ENCODE measurements at regions of chr13 and their contacts with region 1.

Region 1: DNA sequence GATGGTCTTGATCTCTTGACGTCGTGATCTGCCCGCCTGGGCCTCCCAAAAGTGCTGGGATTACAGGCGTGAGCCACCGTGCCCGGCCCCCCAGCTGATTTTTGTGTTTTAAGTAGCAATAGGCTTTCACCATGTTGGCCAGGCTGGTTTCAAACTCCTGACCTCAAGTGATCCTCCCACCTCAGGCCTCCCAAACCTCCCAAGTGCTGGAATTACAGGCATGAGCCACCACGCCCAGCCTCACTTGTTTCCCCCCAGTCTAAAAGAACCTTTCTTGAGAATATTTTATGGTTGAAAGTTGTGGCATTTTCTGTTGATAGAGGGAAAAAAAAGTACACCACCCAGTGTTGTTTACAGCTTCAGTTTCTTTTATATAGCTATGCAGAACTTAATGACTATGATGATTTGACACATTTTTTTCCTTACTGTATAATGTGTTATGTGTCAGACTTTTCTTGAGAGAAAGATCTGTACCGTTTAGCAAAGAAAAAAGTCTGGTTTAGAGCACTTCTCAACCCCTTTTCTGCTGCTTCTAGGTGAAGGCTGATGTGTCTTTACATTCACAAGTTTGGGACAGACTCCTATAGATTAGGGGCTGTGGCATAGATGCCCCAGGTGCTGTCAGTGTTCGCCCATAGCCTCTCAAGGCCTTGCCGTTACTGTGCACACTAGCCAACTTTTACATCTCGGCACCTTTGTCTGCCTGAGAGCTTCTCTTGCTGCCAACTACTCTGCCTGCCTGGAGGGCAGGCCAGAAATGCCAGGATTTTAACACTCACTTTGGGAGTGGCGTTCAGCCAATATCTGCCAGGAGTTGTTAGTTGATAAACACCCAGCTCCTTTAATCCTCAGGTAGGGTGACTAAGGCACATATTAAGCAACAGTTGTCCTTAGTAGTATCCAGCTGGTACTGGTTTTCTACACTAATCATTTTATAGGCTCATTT is 33.0 kb downstream of the KCTD4 start:
- DNase-seq: peak; percentile 99
- H3K4me3 Mint-ChIP-seq: peak overlapping the region; percentile 46
- H3K27ac Mint-ChIP-seq: peak overlapping the region; percentile 90
- H3K4me1 Mint-ChIP-seq: peaks cover 16% of the 10 kb centered on the region
- H3K27me3 Mint-ChIP-seq: no peaks in the 10 kb centered on the region
- CTCF ChIP-seq: no peak

Region 2: DNA sequence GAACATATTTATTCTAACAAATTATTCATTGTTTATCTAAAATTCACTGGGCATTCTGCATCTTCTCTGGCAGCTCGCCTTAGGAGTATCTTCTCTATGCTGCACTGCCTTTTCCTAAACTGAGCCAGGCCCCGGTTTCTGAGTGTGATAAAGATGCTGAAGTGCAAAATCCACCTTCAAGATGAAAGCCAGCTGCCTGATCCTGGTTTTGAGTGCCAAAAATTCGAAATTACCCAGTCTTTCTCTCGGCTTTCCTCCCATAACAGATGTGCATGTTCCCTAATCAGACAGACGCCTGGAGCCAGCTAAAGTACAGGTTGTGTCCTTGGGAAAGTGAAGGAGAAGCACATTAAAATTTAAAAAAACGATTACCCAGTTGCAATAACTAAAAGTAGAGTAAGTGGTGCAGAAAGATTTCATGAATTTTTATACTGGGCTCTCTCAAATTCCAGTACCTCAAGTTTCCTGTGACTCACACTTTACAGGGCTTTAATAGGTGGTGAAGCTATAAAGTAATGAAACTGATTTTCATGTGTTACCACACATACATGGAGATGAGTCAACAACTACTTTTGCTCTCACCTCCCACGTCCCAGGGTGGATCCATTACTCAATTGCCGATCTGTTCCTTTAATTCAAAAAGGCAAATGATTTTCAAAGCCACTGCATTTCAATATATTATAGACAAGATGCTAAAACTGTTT is 112.5 kb before region 1 on chr13:
- CTCF ChIA-PET with region 1: interaction called, 4 read pairs
- POLR2A ChIA-PET with region 1: interaction called, 30 read pairs
- intact Hi-C with region 1: no loop called
- DNase-seq: peak; percentile 93
- H3K4me3 Mint-ChIP-seq: peak overlapping the region; percentile 66
- H3K27ac Mint-ChIP-seq: peak overlapping the region; percentile 88
- H3K4me1 Mint-ChIP-seq: peaks cover 14% of the 10 kb centered on the region
- H3K27me3 Mint-ChIP-seq: no peaks in the 10 kb centered on the region
- CTCF ChIP-seq: no peak

Region 3: DNA sequence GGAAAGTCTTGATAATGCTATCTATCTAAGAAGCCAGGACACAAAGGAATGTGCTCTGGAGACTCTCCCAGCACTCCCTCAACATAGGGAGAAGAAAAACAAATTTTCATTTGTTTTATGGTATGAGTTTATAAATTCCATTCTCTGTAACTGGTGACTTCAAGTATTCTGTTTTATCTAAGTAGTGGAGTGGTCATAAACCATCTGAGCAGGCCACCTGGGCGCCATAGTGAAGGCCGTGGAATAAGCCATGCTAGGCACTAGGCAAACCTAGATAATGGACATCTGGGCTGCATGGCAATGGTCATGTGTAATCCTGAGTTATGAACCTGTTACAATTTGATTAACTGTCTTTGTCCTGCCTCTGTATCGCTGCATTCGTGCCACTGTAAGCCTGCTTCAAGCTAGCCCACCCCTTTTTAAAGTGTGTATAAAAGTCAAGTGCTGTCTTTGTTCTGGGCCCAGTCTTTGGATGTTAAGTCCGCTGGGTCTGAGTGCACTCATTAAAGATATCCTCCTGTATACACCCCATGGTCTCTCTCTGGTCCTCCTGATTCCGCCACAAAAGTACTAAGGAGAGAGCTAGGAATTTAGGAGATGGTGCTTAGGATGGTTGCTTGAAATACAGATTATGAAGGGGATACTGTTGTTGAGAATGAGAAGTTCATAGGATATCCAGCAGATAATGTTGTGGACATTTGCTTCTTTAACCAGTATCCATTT is 34.3 kb before region 1 on chr13:
- CTCF ChIA-PET with region 1: no interaction called
- POLR2A ChIA-PET with region 1: interaction called, 19 read pairs
- intact Hi-C with region 1: no loop called
- DNase-seq: no peak
- H3K4me3 Mint-ChIP-seq: no peak overlapping the region
- H3K27ac Mint-ChIP-seq: no peak overlapping the region
- H3K4me1 Mint-ChIP-seq: peaks cover 30% of the 10 kb centered on the region
- H3K27me3 Mint-ChIP-seq: no peaks in the 10 kb centered on the region
- CTCF ChIP-seq: no peak

Region 4: GRCh38 chr13:45178349-45179162 is 10.7 kb after region 1 on chr13:
- CTCF ChIA-PET with region 1: interaction called, 10 read pairs
- POLR2A ChIA-PET with region 1: interaction called, 48 read pairs
- intact Hi-C with region 1: no loop called
- DNase-seq: peak; percentile 14
- H3K4me3 Mint-ChIP-seq: no peak overlapping the region
- H3K27ac Mint-ChIP-seq: peak overlapping the region; percentile 11
- H3K4me1 Mint-ChIP-seq: peaks cover 15% of the 10 kb centered on the region
- H3K27me3 Mint-ChIP-seq: no peaks in the 10 kb centered on the region
- CTCF ChIP-seq: no peak

Region 5: GRCh38 chr13:45184693-45185092 is 16.8 kb after region 1 on chr13:
- CTCF ChIA-PET with region 1: interaction called, 10 read pairs
- POLR2A ChIA-PET with region 1: interaction called, 48 read pairs
- intact Hi-C with region 1: no loop called
- DNase-seq: no peak
- H3K4me3 Mint-ChIP-seq: no peak overlapping the region
- H3K27ac Mint-ChIP-seq: no peak overlapping the region
- H3K4me1 Mint-ChIP-seq: peaks cover 9% of the 10 kb centered on the region
- H3K27me3 Mint-ChIP-seq: no peaks in the 10 kb centered on the region
- CTCF ChIP-seq: no peak

Region 6: DNA sequence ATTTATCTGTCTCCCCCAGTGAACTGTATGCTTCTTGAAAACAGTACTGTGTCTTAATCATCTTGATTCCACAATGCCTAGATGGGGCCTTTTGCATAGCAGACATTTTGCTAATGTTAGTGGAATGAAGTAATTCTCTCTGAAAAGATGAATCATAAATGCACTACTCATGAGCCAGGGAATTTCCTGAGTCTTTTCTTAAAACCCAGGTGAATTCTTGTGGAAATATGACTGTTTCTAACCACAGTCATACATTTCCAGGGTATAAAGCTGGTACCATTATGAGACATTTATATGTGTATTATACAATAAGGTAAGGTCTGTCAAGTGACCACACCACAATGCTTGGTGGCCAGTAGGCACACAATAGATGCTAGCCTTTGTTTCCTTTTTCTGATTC is 38.5 kb after region 1 on chr13:
- CTCF ChIA-PET with region 1: interaction called, 4 read pairs
- POLR2A ChIA-PET with region 1: interaction called, 28 read pairs
- intact Hi-C with region 1: no loop called
- DNase-seq: peak; percentile 88
- H3K4me3 Mint-ChIP-seq: peak overlapping the region; percentile 56
- H3K27ac Mint-ChIP-seq: peak overlapping the region; percentile 88
- H3K4me1 Mint-ChIP-seq: peaks cover 47% of the 10 kb centered on the region
- H3K27me3 Mint-ChIP-seq: no peaks in the 10 kb centered on the region
- CTCF ChIP-seq: no peak

Region 7: DNA sequence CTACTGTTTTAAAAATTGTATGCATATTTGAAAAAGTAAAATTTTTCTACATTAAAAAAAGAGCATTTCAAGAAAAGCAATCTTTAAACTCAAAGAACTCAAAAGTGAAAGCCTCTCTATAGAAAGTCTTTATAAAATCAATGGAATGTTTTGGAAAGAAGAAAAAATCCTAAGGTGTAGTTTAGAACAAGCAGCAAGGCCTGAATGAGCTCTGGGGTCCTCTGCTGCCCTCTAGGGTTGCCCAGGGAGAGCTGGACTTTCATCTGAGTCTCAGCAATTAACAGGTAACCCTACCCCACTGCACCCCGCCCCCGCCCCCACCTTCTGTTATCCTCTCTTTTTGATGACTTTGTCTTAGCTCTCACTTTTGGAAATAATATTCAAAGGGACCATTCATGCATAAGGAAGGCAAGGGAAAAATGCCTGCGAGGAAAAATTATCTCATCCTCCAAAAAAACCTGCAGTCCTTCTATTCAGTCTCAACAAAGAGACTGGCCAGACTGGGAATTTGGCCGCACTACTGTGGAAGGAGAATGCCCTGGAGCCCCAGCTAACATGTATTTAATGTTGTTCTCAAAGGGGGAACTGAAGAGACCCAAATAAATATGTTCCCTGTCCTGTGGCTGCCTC is 226.2 kb after region 1 on chr13:
- CTCF ChIA-PET with region 1: no interaction called
- POLR2A ChIA-PET with region 1: no interaction called
- intact Hi-C with region 1: no loop called
- DNase-seq: peak; percentile 74
- H3K4me3 Mint-ChIP-seq: no peak overlapping the region
- H3K27ac Mint-ChIP-seq: no peak overlapping the region
- H3K4me1 Mint-ChIP-seq: no peaks in the 10 kb centered on the region
- H3K27me3 Mint-ChIP-seq: no peaks in the 10 kb centered on the region
- CTCF ChIP-seq: peak; percentile 71

Measured in MCF 10A (cell line).